T-cell (primary cell): ENCODE measurements at regions of chr19 and their contacts with region 1.

Region 1: DNA sequence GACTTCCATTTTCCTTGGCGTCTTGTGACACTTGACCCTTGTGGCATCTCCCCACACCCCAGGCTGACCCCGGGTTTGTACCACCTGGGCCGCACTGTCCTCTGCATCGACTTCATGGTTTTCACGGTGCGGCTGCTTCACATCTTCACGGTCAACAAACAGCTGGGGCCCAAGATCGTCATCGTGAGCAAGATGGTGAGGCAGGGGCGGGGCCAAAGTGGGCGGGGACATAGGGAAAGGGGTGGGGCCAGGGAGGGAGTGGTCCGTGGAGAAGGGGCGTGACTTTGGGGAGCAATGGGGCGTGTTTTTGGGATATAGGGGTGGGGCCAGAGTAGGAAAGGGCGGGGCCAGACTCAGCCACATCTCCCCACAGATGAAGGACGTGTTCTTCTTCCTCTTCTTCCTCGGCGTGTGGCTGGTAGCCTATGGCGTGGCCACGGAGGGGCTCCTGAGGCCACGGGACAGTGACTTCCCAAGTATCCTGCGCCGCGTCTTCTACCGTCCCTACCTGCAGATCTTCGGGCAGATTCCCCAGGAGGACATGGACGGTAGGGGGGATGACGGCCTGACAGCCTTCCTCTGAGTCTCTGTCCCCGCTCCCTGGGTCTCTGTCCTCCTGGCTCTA is 42.8 kb downstream of the TRPM4 start:
- DNase-seq: peak in 1 of 35 experiments; percentile 14
- ATAC-seq: no peak
- H3K4me3 ChIP-seq: no peak overlapping the region
- H3K4me3 Mint-ChIP-seq: no peak overlapping the region
- H3K27ac ChIP-seq: no peak overlapping the region
- H3K27ac Mint-ChIP-seq: no peak overlapping the region
- H3K4me1 ChIP-seq: no peaks in the 10 kb centered on the region
- H3K4me1 Mint-ChIP-seq: peaks cover 0 to 5% (median 0%) of the 10 kb centered on the region in 3 donors
- H3K27me3 ChIP-seq: peaks cover 0 to 14% of the 10 kb centered on the region in 2 experiments
- H3K27me3 Mint-ChIP-seq: peaks cover 0 to 1% of the 10 kb centered on the region in 2 donors

Region 2: DNA sequence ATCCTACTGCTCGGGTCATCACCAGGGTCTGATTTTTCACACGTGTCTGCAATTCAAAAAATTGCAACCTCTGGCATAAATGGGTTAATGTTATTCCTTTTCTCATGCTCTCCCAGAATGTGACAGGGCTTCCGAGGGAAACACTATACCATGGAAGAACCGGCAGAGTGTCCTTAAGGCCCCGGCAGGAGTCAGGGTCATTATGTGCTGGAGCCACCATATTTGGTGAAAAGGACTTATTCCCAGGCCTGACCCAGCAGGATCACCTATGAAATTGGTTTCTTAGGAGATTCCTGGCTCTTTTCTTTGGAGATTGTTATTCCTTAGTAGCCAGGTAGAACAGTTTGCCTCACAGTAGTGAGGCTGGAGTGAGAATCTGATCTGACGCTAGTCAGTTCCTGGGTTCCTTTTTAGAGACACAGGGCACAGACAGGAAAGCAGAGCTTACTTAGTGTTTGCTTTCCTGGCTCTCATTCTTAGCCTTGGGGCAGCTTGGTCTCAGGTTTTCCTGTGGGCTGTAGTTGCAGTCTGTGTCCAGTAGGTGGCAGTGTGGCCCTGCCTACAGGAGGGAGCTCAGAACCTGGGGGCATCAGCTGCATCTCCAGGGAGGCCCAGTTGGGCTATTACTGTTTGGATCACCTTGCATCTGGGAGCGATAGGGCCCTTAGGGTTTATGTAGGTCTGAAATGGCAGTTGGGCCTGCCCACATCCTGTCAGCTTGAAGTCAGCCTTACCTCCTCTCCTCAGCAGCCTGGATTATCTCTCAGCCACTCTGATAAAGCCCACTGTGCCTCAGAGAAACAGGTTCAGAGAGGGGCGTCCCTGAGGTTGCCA is 102.7 kb before region 1 on chr19:
- CTCF ChIA-PET with region 1: interaction called, 4 to 19 read pairs
- POLR2A ChIA-PET with region 1: no interaction called
- DNase-seq: peak; percentile 42 to 86 (median 66)
- ATAC-seq: peak; percentile 82 to 87 (median 84)
- H3K4me3 ChIP-seq: no peak overlapping the region
- H3K4me3 Mint-ChIP-seq: no peak overlapping the region
- H3K27ac ChIP-seq: no peak overlapping the region
- H3K27ac Mint-ChIP-seq: no peak overlapping the region
- H3K4me1 ChIP-seq: peaks cover 0 to 9% of the 10 kb centered on the region in 2 experiments
- H3K4me1 Mint-ChIP-seq: peaks cover 7 to 12% (median 8%) of the 10 kb centered on the region in 3 donors
- H3K27me3 ChIP-seq: no peaks in the 10 kb centered on the region
- H3K27me3 Mint-ChIP-seq: no peaks in the 10 kb centered on the region

Region 3: GRCh38 chr19:49224856-49225255 is 24.5 kb after region 1 on chr19:
- CTCF ChIA-PET with region 1: no interaction called
- POLR2A ChIA-PET with region 1: interaction called in 1 of 2 experiments, 15 read pairs
- DNase-seq: peak in 4 of 35 experiments; percentile 15 to 27 (median 16)
- ATAC-seq: peak in 1 of 4 experiments; percentile 34
- H3K4me3 ChIP-seq: no peak overlapping the region
- H3K4me3 Mint-ChIP-seq: no peak overlapping the region
- H3K27ac ChIP-seq: no peak overlapping the region
- H3K27ac Mint-ChIP-seq: no peak overlapping the region
- H3K4me1 ChIP-seq: peaks cover 0 to 7% of the 10 kb centered on the region in 2 experiments
- H3K4me1 Mint-ChIP-seq: peaks cover 5 to 9% (median 5%) of the 10 kb centered on the region in 3 donors
- H3K27me3 ChIP-seq: peaks cover 0 to 33% of the 10 kb centered on the region in 2 experiments
- H3K27me3 Mint-ChIP-seq: peaks cover 7 to 11% of the 10 kb centered on the region in 2 donors

Region 4: DNA sequence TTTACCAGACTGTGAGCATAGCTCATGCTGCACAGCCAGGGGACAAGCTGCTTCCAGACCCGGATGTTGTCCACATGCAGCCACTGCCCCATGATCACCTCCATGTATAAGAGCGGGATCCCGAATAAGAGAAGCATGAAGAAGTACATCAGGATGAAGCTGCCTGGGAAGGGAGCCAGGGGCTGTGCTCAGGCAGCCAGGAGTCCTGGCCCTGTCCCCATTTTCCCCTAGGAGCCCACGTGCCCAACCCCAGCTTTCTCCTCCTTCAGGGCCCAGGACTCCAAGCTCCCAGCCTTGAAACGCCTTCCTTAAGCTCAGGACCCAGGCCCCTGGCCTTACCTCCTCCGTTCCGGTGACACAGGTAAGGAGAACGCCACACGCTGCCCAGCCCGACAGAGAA is 55.3 kb after region 1 on chr19:
- CTCF ChIA-PET with region 1: interaction called, 3 to 12 read pairs
- POLR2A ChIA-PET with region 1: no interaction called
- DNase-seq: no peak
- ATAC-seq: no peak
- H3K4me3 ChIP-seq: no peak overlapping the region
- H3K4me3 Mint-ChIP-seq: no peak overlapping the region
- H3K27ac ChIP-seq: no peak overlapping the region
- H3K27ac Mint-ChIP-seq: no peak overlapping the region
- H3K4me1 ChIP-seq: no peaks in the 10 kb centered on the region
- H3K4me1 Mint-ChIP-seq: no peaks in the 10 kb centered on the region
- H3K27me3 ChIP-seq: peaks cover 0 to 44% of the 10 kb centered on the region in 2 experiments
- H3K27me3 Mint-ChIP-seq: peaks cover 35 to 54% of the 10 kb centered on the region in 2 donors

Region 5: DNA sequence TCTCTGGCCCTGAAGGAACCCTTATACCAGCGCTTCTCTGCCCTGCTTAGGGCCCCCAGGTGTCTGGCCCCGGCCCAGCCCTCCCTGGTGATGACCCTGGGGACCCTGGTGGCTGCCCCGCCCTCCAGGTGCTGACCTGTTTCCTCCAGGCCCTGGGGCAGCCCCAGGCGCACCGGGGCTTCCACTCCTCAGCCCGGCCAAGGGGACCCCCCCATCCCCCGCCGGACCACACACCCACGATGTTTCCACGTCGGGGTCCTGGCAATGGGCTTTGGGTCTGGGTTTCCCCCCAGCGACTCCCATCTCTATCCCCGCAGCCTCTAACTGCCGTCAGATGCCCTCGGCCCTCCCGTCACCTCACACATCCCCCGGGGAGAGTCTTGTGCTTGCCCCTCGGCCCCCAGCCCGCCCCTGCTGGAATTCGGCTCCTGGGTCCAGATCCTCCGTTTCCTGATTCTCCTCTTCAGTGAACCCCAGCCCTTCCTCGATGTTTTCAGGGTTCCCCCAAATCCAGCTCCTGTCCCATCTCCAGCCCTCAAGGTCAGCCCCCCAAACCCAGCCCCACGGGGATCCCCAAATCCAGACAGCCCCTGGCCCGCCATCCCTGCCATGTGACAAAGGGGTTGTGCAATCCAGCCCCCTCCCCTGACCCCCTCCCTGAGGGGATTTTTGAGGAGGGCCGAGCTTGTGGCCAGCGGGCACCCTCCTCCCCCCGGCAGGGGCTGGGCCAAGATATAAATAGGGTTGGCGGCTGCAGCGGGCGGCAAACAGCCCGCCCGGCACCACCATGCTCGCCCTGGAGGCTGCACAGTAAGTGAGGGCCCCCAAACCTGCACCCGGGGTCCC is 1218.0 kb after region 1 on chr19 and contains the start of gene SPIB:
- CTCF ChIA-PET with region 1: no interaction called
- POLR2A ChIA-PET with region 1: no interaction called
- DNase-seq: no peak
- ATAC-seq: no peak
- H3K4me3 ChIP-seq: no peak within 1 kb of the TSS
- H3K4me3 Mint-ChIP-seq: peak within 1 kb of the TSS in 2 of 3 donors; percentile 6 to 67
- H3K27ac ChIP-seq: no peak within 1 kb of the TSS
- H3K27ac Mint-ChIP-seq: peak within 1 kb of the TSS in 1 of 2 donors; percentile 59
- H3K4me1 ChIP-seq: peaks cover 0 to 15% of the 10 kb centered on the region in 2 experiments
- H3K4me1 Mint-ChIP-seq: peaks cover 10 to 15% (median 11%) of the 10 kb centered on the region in 3 donors
- H3K27me3 ChIP-seq: peaks cover 5 to 46% of the 10 kb centered on the region in 2 experiments
- H3K27me3 Mint-ChIP-seq: peaks cover 23 to 27% of the 10 kb centered on the region in 2 donors
- total RNA-seq, gene SPIB: 0.72 to 9.7 (median 4.1) TPM